SK-N-SH (cell line): ENCODE measurements at regions of chr1 and their contacts with region 1.

Region 1: DNA sequence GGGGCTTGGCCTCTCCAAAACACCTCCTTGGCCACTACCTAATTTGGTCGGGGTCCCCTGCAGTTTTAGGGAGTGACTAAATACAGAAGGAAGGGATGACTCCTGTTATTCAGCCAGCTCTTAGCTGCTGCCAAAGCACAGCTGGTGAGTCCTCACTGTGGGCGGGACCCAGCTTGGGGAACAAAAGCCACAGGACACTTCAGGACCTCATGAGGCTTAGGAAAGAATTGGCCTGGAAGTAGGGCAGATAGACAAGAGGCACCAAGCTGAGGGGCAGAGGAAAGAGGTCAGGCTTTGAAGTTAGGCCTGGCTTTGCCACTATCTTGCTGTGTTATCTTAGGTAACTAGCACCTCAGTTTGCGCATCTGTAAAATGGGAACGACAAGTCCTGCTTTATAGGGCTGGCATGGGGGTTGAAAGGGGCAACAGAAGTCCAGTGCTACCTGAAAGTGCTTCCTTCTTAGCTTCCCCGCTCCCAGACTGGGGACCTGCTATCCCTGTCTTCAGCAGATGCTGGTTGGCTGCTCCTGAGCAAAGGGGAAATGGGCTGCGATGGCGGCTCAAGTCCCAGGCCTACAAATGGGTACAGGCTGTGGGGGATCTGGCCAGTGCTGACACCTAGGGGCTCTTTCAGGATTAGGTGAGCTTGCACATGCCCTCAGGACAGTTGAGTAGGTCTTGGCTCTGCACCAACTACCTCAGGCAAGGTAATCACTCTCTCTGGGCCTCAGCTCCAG is 15.7 kb downstream of the IFI6 start:
- DNase-seq: no peak
- H3K4me3 ChIP-seq: no peak overlapping the region
- H3K27ac ChIP-seq: no peak overlapping the region
- H3K4me1 ChIP-seq: peaks cover 6 to 7% of the 10 kb centered on the region in 2 experiments; a peak in 2 of 4 replicates
- H3K27me3 ChIP-seq: no peaks in the 10 kb centered on the region
- CTCF ChIP-seq: no peak
- EP300 ChIP-seq: no peak
- RAD21 ChIP-seq: no peak

Region 2: GRCh38 chr1:27481994-27482620 is 174.2 kb before region 1 on chr1:
- CTCF ChIA-PET with region 1: no interaction called
- POLR2A ChIA-PET with region 1: no interaction called
- DNase-seq: no peak
- H3K4me3 ChIP-seq: no peak overlapping the region
- H3K27ac ChIP-seq: no peak overlapping the region
- H3K4me1 ChIP-seq: 0 out of 4 replicates have a peak, but pooled peaks cover 0 to 12% of the 10 kb centered on the region in 2 experiments
- H3K27me3 ChIP-seq: no peaks in the 10 kb centered on the region
- CTCF ChIP-seq: no peak
- EP300 ChIP-seq: no peak
- RAD21 ChIP-seq: no peak

Region 3: DNA sequence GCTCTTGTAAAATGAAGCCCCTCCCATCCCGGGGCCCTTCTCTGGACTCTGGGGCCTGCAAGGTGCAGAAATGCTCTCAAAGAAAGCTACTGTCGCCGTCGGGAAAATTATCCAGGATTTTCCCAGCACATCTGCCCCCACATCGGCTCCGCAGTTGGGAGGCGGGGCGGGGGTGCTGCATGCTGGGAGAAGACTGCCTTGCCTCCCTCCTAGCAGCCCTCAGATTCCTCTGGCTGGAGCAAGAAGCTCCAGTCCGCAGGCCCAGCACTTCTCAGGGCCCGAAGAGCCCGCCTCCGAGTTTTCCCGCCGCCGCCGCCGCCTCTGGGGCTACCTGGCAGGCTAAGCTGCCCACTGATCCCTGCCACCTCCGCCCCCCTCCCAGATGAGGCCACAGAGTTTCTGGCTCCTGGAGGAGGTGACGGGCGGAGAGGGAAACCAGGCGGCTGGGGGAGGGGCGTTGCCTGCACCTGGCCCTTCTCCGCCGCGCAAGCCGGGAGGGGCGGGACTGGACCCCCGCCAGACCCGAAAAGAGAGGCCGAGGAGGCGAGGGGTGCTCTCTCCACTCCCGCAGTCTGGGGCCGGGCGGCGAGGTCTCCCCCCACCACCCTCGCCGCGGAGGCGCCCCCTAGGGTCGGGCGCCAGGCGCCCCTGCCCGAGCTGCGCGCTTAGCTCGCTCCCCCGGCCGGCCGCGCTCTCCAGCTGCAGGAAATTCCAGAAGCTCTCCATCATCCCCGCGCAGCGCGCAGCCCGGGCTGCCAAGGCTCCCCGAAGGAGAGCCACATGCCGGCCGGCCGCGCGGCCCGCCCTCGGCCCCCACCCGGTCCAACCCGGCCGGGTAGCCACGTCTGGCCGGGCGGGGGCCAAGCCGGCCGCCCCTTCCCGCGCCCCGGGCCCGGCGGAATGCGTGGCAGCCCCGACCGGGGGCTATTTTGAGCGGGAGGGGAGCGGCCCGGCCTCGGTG is 81.2 kb before region 1 on chr1:
- CTCF ChIA-PET with region 1: no interaction called
- POLR2A ChIA-PET with region 1: no interaction called
- DNase-seq: peak; percentile 72
- H3K4me3 ChIP-seq: peak overlapping the region in 1 of 2 experiments; percentile 31; a peak in 1 of 4 replicates
- H3K27ac ChIP-seq: peak overlapping the region in 1 of 2 experiments; percentile 50; a peak in 1 of 4 replicates
- H3K4me1 ChIP-seq: peaks cover 50 to 57% of the 10 kb centered on the region in 2 experiments; a peak in 3 of 4 replicates
- H3K27me3 ChIP-seq: no peaks in the 10 kb centered on the region
- CTCF ChIP-seq: peak; percentile 55
- EP300 ChIP-seq: 0 out of 4 replicates have a peak, but pooled peaks of 1 of the 2 experiments have one; percentile 19
- RAD21 ChIP-seq: no peak

Region 4: GRCh38 chr1:27643701-27644625 is 12.4 kb before region 1 on chr1:
- CTCF ChIA-PET with region 1: interaction called, 10 read pairs
- POLR2A ChIA-PET with region 1: interaction called, 3 read pairs
- DNase-seq: peak; percentile 67
- H3K4me3 ChIP-seq: no peak overlapping the region
- H3K27ac ChIP-seq: no peak overlapping the region
- H3K4me1 ChIP-seq: peaks cover 0 to 4% of the 10 kb centered on the region in 2 experiments; a peak in 1 of 4 replicates
- H3K27me3 ChIP-seq: no peaks in the 10 kb centered on the region
- CTCF ChIP-seq: peak; percentile 68
- EP300 ChIP-seq: no peak
- RAD21 ChIP-seq: peak; percentile 53